PC-3 (cell line): ENCODE measurements at regions of chr17 and their contacts with region 1.

Region 1: DNA sequence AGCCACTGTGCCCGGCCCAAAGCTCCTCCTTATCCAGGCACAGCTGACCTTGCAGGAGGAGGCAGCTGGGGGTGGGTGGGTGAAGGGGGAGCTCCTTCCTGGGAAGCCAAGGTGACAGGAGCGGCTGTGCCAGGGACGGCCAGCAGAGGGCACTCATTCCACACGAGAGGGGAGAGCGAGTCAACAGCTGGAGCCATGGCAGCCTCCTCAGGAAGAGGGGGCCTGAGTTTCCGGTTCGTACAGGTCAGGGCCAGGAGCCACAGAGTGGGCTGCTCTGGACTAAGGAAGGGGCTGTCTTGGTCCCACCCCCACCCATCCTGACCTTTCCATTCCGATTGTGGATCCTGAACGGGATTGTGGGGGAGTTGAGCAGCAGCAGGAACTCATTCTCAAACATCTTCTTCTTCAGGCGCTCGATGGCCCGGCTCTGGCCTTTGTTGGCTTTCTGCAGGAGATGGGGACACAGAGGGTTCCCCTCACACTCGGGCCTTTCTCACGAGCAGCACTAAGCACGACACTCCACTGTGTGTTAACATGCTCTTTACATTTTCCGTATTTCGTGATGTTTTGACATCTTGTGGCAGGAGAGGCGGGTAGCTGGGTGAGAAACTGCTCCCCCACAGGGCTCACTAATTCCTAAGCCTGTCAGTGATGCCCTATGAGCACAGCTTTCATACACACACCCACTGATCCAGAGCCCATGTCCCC is 61.6 kb downstream of the TIMM22 start:
- DNase-seq: peak; percentile 79
- ATAC-seq: peak; percentile 18; the same call in 1 of the 2 replicates
- H3K4me3 ChIP-seq: no peak overlapping the region
- H3K27ac ChIP-seq: no peak overlapping the region
- H3K4me1 ChIP-seq: peaks cover 12% of the 10 kb centered on the region
- H3K27me3 ChIP-seq: no peaks in the 10 kb centered on the region
- CTCF ChIP-seq: peak; percentile 58

Region 2: GRCh38 chr17:992933-993332 is 65.6 kb before region 1 on chr17:
- CTCF ChIA-PET with region 1: no interaction called
- POLR2A ChIA-PET with region 1: no interaction called
- intact Hi-C with region 1: no loop called
- DNase-seq: no peak
- ATAC-seq: no peak
- H3K4me3 ChIP-seq: no peak overlapping the region
- H3K27ac ChIP-seq: no peak overlapping the region
- H3K4me1 ChIP-seq: peaks cover 2% of the 10 kb centered on the region
- H3K27me3 ChIP-seq: no peaks in the 10 kb centered on the region
- CTCF ChIP-seq: no peak

Region 3: DNA sequence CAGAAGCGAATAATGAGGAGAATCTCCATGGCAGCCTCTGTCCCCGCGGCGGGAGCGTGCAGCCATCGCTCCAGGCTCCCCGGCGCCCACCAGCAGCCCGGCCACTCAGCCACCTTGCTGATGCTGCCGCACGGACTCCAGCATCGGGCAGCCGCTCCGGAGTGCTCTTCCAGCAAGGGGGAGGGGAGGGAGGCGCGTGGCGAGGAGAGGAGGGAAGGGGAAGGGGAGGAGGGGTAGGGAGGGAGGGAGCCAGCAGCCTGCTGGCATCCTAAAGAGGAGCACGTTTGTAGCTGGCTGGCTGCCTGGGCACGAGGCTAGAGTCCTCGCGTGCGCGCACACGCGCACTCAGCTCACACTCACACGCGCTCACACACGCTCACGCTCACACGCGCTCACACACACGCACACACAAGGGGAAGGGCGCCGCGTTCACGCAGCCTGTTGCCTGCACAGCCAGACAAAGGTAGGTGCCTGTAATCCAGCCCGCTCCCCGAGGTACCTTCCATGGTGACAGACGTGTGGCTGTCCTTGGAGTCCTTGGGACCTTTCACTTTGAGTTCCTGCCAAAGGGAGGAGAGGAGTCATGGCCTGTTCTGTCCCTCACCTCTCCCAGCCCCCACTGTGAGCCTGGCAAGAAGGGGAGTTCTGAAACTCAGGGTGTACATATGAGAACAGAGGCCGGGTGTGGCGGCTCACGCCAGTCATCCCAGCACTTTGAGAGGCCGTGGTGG is 20.4 kb after region 1 on chr17:
- CTCF ChIA-PET with region 1: interaction called, 9 read pairs
- POLR2A ChIA-PET with region 1: no interaction called
- intact Hi-C with region 1: loop called (anchors 2 kb)
- DNase-seq: no peak
- ATAC-seq: no peak
- H3K4me3 ChIP-seq: no peak overlapping the region
- H3K27ac ChIP-seq: no peak overlapping the region
- H3K4me1 ChIP-seq: peaks cover 39% of the 10 kb centered on the region
- H3K27me3 ChIP-seq: no peaks in the 10 kb centered on the region
- CTCF ChIP-seq: no peak

Region 4: DNA sequence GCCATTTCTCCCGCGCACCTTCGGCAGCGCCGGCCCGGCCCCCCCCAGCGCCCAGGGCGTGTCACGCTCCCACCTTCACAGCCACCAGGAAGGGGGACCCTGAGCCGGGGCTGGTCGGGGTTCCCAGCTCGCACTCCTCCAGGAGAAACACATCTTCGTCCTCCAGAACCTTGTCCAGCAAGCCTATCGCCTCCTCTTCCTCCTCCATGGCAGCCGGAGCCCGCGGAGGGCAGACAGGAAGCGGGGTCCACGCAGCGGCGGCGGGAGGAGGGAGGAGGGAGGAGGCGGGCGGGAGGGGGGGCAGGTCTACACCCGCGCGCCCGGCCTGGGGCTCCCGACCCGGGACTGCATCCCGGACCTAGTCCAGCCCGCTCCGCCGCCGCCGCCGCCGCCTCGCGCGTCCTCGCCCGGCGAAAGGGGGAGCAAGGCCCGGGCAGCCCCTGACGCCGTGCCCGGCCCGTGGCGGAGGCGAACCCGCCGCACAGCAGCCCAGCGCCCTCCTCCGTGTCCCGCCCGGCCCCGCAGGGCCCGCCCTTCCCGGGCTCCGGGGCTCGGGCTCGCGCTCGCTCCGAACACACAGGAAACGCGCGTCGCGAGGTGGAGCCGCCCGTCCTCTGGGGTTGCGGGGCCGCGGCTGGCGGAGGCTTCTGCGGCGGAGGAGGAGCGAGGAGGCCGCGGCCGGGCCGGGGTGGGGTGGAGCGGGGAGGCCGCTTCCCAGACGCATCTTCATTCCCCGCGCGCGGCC is 50.5 kb after region 1 on chr17:
- CTCF ChIA-PET with region 1: interaction called, 9 read pairs
- POLR2A ChIA-PET with region 1: no interaction called
- intact Hi-C with region 1: loop called (anchors 2 kb)
- DNase-seq: peak; percentile 38
- ATAC-seq: peak; percentile 17
- H3K4me3 ChIP-seq: peak overlapping the region; percentile 80
- H3K27ac ChIP-seq: peak overlapping the region; percentile 100
- H3K4me1 ChIP-seq: peaks cover 41% of the 10 kb centered on the region
- H3K27me3 ChIP-seq: no peaks in the 10 kb centered on the region
- CTCF ChIP-seq: no peak

Region 5: DNA sequence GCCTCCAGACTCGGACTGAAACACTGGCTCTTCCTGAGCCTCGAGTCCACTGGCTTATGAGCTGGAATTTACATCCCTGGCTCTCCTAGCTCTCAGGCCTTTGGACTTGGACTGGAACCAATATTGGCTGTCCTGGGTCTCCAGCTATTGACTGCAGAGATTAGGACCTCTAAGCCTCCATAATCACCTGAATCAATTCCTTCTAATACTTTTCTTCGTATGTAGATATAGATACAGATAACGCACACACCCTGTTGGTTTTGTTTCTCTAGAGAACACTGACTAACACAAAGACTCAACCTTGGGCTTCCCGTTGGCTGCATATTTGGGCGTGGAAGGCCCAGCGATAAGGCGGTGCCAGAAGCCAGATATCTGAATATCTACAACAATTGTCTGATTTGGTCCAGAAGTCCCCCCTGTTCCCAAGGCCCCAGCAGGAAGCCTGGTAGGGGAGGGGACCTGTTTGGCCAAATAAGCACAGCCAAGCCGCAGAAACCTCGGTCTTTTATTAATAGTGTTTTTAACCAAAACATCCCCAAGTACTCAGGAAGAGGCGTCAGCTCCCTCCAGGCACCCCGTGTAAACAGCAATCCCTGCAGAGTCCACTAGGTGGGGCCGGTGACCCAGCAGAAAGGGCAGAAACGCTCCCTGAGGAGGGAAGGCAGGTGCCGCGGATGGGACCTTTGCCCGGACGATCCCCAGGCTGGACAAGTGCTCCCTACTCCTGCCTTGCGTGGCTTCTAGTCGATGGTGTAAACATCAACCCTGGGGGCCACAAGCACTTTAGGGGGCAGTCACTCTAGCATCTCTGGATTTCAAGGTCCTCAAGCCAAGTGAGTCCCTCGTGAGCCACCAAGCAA is 64.2 kb after region 1 on chr17:
- CTCF ChIA-PET with region 1: interaction called, 20 read pairs
- POLR2A ChIA-PET with region 1: no interaction called
- intact Hi-C with region 1: no loop called
- DNase-seq: peak; percentile 74
- ATAC-seq: peak; percentile 87
- H3K4me3 ChIP-seq: no peak overlapping the region; the same call in 1 of the 2 replicates
- H3K27ac ChIP-seq: peak overlapping the region; percentile 20
- H3K4me1 ChIP-seq: peaks cover 8% of the 10 kb centered on the region
- H3K27me3 ChIP-seq: no peaks in the 10 kb centered on the region
- CTCF ChIP-seq: peak; percentile 81

Region 6: GRCh38 chr17:1147661-1148060 is 89.1 kb after region 1 on chr17:
- CTCF ChIA-PET with region 1: interaction called, 14 read pairs
- POLR2A ChIA-PET with region 1: no interaction called
- intact Hi-C with region 1: no loop called
- DNase-seq: peak; percentile 80
- ATAC-seq: peak; percentile 85
- H3K4me3 ChIP-seq: no peak overlapping the region
- H3K27ac ChIP-seq: no peak overlapping the region
- H3K4me1 ChIP-seq: no peaks in the 10 kb centered on the region
- H3K27me3 ChIP-seq: no peaks in the 10 kb centered on the region
- CTCF ChIP-seq: peak; percentile 70

Region 7: GRCh38 chr17:1294157-1294717 is 235.7 kb after region 1 on chr17:
- CTCF ChIA-PET with region 1: no interaction called
- POLR2A ChIA-PET with region 1: no interaction called
- intact Hi-C with region 1: no loop called
- DNase-seq: no peak
- ATAC-seq: no peak
- H3K4me3 ChIP-seq: no peak overlapping the region
- H3K27ac ChIP-seq: no peak overlapping the region
- H3K4me1 ChIP-seq: no peaks in the 10 kb centered on the region
- H3K27me3 ChIP-seq: no peaks in the 10 kb centered on the region
- CTCF ChIP-seq: no peak